Right cardiac atrium (tissue), 5 donors: ENCODE measurements at regions of chr1 and their contacts with region 1.

Region 1: GRCh38 chr1:16206547-16207317 is 5.7 kb downstream of the ARHGEF19 start:
- DNase-seq: peak; percentile 99
- ATAC-seq: peak; percentile 94 to 95
- H3K4me3 ChIP-seq: peak overlapping the region; percentile 31
- H3K27ac ChIP-seq: peak overlapping the region; percentile 67
- H3K4me1 ChIP-seq: peaks cover 2% of the 10 kb centered on the region
- H3K27me3 ChIP-seq: no peaks in the 10 kb centered on the region

Region 2: GRCh38 chr1:15975805-15976680 is 230.7 kb before region 1 on chr1 and contains the start of gene ZBTB17:
- intact Hi-C with region 1: no loop called
- DNase-seq: peak; percentile 96 to 99 (median 98)
- ATAC-seq: peak; percentile 98 to 99
- H3K4me3 ChIP-seq: peak within 1 kb of the TSS; percentile 95
- H3K27ac ChIP-seq: peak within 1 kb of the TSS; percentile 75
- H3K4me1 ChIP-seq: peaks cover 4% of the 10 kb centered on the region
- H3K27me3 ChIP-seq: no peaks in the 10 kb centered on the region
- total RNA-seq, gene ZBTB17: 22.8 to 27.0 (median 24.0) TPM

Region 3: GRCh38 chr1:16366722-16367257 is 160.1 kb after region 1 on chr1 and contains the start of gene SZRD1:
- intact Hi-C with region 1: loop called in 1 of 4 experiments (anchors 5 kb)
- DNase-seq: peak; percentile 96 to 99 (median 99)
- ATAC-seq: peak; percentile 92 to 93
- H3K4me3 ChIP-seq: peak within 1 kb of the TSS; percentile 74
- H3K27ac ChIP-seq: peak within 1 kb of the TSS; percentile 96
- H3K4me1 ChIP-seq: no peaks in the 10 kb centered on the region
- H3K27me3 ChIP-seq: no peaks in the 10 kb centered on the region
- total RNA-seq, gene SZRD1: 106 to 132 (median 109) TPM